Activated T-helper 2 cell treated with anti-CD3 and anti-CD28 coated beads, Interferon-gamma antibody, Interleukin-2, Interleukin-4, amounts not matched to agents 10 μg/mL and 5 μg/mL and 100 μg/mL, durations not matched to agents 14 hours and 24 hours and 36 hours (primary cell): ENCODE measurements at regions of chr2 and their contacts with region 1.

Region 1: GRCh38 chr2:113080134-113080533 is 12.4 kb downstream of the IL1F10 start:
- DNase-seq: peak; percentile 28
- H3K4me3 Mint-ChIP-seq: no peak overlapping the region
- H3K27ac Mint-ChIP-seq: no peak overlapping the region
- H3K4me1 Mint-ChIP-seq: peaks cover 16% of the 10 kb centered on the region
- H3K27me3 Mint-ChIP-seq: peaks cover 11% of the 10 kb centered on the region

Region 2: GRCh38 chr2:113105047-113105785 is 25.1 kb after region 1 on chr2:
- intact Hi-C with region 1: loop called (anchors 2 kb)
- DNase-seq: no peak
- H3K4me3 Mint-ChIP-seq: no peak overlapping the region
- H3K27ac Mint-ChIP-seq: peak overlapping the region; percentile 100
- H3K4me1 Mint-ChIP-seq: peaks cover 61% of the 10 kb centered on the region
- H3K27me3 Mint-ChIP-seq: no peaks in the 10 kb centered on the region

Region 3: DNA sequence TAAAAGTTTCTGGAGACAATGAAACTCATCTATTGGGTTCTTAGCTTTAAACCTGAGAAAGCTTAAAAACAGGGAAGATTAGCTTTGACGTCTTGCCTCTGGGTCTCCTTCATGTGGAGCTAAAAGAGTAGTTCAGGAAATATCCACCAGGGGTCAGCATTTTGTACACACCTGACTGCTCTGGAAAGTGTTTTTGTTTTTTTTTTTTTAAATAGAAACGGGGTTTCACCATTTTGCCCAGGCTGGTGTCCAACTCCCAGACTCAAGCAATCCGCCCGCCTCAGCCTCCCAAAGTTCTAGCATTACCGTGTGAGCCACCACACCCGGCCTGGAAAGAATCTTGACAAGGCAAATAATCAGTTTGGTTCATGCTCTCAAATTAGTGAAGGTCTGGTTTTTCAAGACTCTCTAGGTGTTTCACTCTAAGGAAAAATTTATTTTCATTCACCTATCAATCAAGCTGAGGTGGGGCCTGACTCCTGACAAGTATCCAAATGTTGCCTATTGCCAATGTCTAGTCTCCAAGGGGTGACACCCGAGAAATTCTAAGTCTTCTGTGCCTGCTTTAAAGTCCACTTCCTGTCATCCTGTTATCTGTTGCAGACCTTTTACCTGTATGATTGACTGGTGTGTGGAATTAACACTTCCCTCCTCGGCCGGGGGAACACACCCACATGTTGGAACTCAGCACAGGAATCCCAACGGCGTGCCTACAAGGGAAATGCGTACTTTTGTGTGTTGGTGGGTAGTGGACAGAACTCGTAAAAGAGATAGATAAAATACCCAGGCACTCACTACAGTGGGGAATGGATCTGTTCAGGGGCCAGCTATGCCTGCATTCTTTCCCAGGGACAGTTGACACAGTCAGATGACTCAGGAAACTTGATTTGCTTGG is 58.5 kb after region 1 on chr2:
- intact Hi-C with region 1: loop called (anchors 1 kb)
- DNase-seq: peak; percentile 50
- H3K4me3 Mint-ChIP-seq: no peak overlapping the region
- H3K27ac Mint-ChIP-seq: no peak overlapping the region
- H3K4me1 Mint-ChIP-seq: peaks cover 35% of the 10 kb centered on the region
- H3K27me3 Mint-ChIP-seq: peaks cover 3% of the 10 kb centered on the region

Region 4: DNA sequence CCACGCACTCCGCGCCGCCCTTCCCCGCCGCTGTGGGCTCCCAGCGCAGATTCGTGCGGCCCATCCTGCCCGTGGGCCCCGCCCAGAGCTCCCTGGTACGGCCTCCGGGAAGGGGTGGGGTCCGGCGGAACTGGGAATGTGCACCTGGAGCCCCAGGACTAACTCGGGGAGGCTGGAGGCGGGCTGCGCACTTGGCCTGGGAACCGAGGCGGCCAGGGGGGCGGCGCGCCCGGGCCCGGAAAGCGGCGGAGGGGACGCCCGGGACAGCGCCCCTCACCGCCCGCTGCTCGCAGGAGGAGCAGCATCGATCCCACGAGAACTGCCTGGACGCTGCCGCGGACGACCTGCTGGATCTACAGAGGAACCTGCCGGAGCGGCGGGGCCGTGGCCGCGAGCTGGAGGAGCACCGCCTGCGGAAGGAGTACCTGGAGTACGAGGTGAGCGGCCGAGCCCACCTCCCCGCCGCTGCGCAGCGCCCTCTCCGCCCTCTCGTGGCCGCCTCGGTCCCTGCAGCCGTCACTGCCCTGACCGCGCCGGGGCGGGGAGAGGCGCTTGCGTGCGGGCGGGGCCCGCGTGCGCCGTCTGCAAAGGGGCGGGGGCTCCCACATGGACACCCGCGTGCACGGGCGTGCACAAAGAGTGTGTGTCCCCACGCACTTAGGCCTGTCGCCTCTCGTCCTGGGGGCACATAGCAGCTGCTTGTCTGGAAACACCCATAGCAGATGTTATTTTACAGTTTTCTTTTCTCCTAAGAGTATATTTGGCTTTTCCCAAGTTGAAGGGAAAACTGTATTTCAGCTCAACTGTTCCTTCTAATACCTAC is 118.9 kb after region 1 on chr2:
- intact Hi-C with region 1: loop called (anchors 1 kb)
- DNase-seq: peak; percentile 70
- H3K4me3 Mint-ChIP-seq: no peak overlapping the region
- H3K27ac Mint-ChIP-seq: no peak overlapping the region
- H3K4me1 Mint-ChIP-seq: peaks cover 29% of the 10 kb centered on the region
- H3K27me3 Mint-ChIP-seq: no peaks in the 10 kb centered on the region

Region 5: DNA sequence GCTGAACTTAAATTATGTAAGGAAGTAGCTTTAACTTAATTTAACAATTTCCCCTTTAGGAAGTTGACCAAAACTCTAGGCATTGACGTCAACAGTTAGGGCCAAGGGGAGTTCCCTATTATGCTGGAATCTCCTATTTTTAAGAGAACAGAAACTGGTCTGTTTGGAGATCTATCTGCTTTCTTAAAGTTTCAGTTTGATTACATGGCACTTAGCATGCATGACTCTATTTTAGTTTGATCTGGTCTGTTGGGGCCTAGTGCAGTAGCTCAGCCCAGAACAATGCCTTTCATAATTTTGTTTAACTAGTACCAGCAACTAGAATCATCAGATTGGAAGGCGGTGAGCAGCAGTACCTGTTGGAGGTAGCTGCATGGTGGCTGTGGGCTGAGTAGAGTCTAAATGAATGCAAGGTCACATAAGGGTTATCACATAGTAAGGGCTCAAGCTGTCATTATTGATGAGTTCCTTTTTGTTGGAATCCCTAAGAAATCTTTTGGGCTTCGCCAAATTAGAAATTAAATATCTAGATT is 296.8 kb after region 1 on chr2:
- intact Hi-C with region 1: loop called (anchors 5 kb)
- DNase-seq: no peak
- H3K4me3 Mint-ChIP-seq: no peak overlapping the region
- H3K27ac Mint-ChIP-seq: peak overlapping the region; percentile 70
- H3K4me1 Mint-ChIP-seq: peaks cover 20% of the 10 kb centered on the region
- H3K27me3 Mint-ChIP-seq: peaks cover 15% of the 10 kb centered on the region